Ovary (tissue), 10 donors: ENCODE measurements at regions of chr3 and their contacts with region 1.

Region 1: GRCh38 chr3:53254509-53255422 is 1.1 kb downstream of the TKT start:
- DNase-seq: peak; percentile 65 to 79 (median 70)
- H3K4me3 ChIP-seq: peak overlapping the region; percentile 69
- H3K27ac ChIP-seq: peak overlapping the region; percentile 68 to 82
- H3K4me1 ChIP-seq: peaks cover 10% of the 10 kb centered on the region
- H3K27me3 ChIP-seq: no peaks in the 10 kb centered on the region
- CTCF ChIP-seq: no peak
- EP300 ChIP-seq: no peak
- POLR2A ChIP-seq: no peak

Region 2: GRCh38 chr3:52428151-52429005 is 826.4 kb before region 1 on chr3:
- intact Hi-C with region 1: no loop called
- DNase-seq: peak; percentile 60 to 81 (median 65)
- H3K4me3 ChIP-seq: no peak overlapping the region
- H3K27ac ChIP-seq: no peak overlapping the region
- H3K4me1 ChIP-seq: peaks cover under 1% of the 10 kb centered on the region
- H3K27me3 ChIP-seq: no peaks in the 10 kb centered on the region
- CTCF ChIP-seq: peak; percentile 60 to 76 (median 74)
- EP300 ChIP-seq: no peak
- POLR2A ChIP-seq: no peak

Region 3: DNA sequence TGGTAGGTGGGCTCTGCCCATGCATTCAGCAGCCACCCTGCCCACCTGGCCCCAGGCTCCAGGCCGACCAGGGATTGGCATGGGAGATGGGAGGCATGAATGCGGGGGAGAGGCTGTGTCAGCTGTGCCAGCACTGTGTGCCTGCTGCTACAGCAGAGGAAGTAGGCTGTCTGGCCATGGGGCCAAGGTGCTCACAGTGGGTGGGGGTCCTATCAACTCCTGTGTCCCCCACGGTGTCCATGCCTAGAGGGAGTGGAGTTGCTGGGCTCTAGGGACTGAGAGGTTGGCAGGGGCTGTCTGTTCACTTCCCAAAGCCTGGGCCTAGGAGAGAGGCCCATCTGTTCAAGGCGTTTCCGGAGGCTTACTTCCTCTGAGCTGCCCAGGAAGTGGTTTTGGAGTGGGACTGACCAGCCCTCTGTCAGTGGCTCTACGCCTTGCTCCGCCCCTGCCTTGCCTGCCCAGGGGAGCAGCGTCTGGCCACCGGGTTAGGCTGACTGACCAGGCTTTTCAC is 87.9 kb before region 1 on chr3:
- intact Hi-C with region 1: loop called in 1 of 4 experiments (anchors 5 kb)
- DNase-seq: peak in 4 of 5 donors; percentile 31 to 60 (median 36)
- H3K4me3 ChIP-seq: no peak overlapping the region
- H3K27ac ChIP-seq: no peak overlapping the region
- H3K4me1 ChIP-seq: peaks cover 5% of the 10 kb centered on the region
- H3K27me3 ChIP-seq: no peaks in the 10 kb centered on the region
- CTCF ChIP-seq: no peak
- EP300 ChIP-seq: no peak
- POLR2A ChIP-seq: no peak